Activated T-helper 1 cell treated with anti-CD3 and anti-CD28 coated beads, Interleukin-12 subunit alpha, Interleukin-12 subunit beta, Interleukin-2, Interleukin-4 antibody, amounts not matched to agents 30 ng/mL and 10 ng/mL and 1 ng/mL, durations not matched to agents 14 hours and 24 hours and 36 hours (primary cell): ENCODE measurements at regions of chr12 and their contacts with region 1.

Region 1: GRCh38 chr12:3885277-3886094 is 12.3 kb upstream of the PARP11 start:
- DNase-seq: no peak
- H3K4me3 Mint-ChIP-seq: no peak overlapping the region
- H3K27ac Mint-ChIP-seq: no peak overlapping the region
- H3K4me1 Mint-ChIP-seq: peaks cover 8% of the 10 kb centered on the region
- H3K27me3 Mint-ChIP-seq: peaks cover 12% of the 10 kb centered on the region

Region 2: GRCh38 chr12:3832738-3833137 is 52.7 kb before region 1 on chr12:
- intact Hi-C with region 1: no loop called
- DNase-seq: no peak
- H3K4me3 Mint-ChIP-seq: no peak overlapping the region
- H3K27ac Mint-ChIP-seq: no peak overlapping the region
- H3K4me1 Mint-ChIP-seq: peaks cover 18% of the 10 kb centered on the region
- H3K27me3 Mint-ChIP-seq: peaks cover 2% of the 10 kb centered on the region

Region 3: GRCh38 chr12:3964439-3964838 is 79.0 kb after region 1 on chr12:
- intact Hi-C with region 1: loop called (anchors 2 kb)
- DNase-seq: no peak
- H3K4me3 Mint-ChIP-seq: no peak overlapping the region
- H3K27ac Mint-ChIP-seq: no peak overlapping the region
- H3K4me1 Mint-ChIP-seq: peaks cover 18% of the 10 kb centered on the region
- H3K27me3 Mint-ChIP-seq: peaks cover 1% of the 10 kb centered on the region

Region 4: DNA sequence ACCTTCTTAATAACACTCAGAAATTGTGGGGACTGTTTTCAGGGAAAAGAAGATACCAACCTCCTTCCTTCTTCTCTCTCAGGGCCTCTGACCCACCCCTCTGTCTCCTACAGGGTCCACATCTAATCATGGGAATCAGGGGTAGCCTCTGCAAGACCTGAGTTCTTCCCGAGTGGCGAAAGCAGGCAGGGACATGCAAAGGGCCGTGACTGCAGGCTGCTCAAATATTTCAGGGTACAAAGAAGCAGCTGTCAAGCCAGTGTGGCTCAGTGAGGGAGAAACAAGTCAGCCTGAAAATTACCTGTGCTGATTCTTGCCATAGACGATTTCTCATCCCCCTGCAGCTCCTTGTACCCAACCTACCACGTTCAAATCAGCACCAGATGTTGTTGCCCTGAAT is 110.9 kb after region 1 on chr12:
- intact Hi-C with region 1: loop called (anchors 1 kb)
- DNase-seq: no peak
- H3K4me3 Mint-ChIP-seq: no peak overlapping the region
- H3K27ac Mint-ChIP-seq: no peak overlapping the region
- H3K4me1 Mint-ChIP-seq: peaks cover 16% of the 10 kb centered on the region
- H3K27me3 Mint-ChIP-seq: peaks cover 14% of the 10 kb centered on the region

Region 5: GRCh38 chr12:4037747-4038312 is 152.3 kb after region 1 on chr12:
- intact Hi-C with region 1: loop called (anchors 1 kb)
- DNase-seq: no peak
- H3K4me3 Mint-ChIP-seq: no peak overlapping the region
- H3K27ac Mint-ChIP-seq: no peak overlapping the region
- H3K4me1 Mint-ChIP-seq: peaks cover 6% of the 10 kb centered on the region
- H3K27me3 Mint-ChIP-seq: peaks cover 27% of the 10 kb centered on the region

Region 6: DNA sequence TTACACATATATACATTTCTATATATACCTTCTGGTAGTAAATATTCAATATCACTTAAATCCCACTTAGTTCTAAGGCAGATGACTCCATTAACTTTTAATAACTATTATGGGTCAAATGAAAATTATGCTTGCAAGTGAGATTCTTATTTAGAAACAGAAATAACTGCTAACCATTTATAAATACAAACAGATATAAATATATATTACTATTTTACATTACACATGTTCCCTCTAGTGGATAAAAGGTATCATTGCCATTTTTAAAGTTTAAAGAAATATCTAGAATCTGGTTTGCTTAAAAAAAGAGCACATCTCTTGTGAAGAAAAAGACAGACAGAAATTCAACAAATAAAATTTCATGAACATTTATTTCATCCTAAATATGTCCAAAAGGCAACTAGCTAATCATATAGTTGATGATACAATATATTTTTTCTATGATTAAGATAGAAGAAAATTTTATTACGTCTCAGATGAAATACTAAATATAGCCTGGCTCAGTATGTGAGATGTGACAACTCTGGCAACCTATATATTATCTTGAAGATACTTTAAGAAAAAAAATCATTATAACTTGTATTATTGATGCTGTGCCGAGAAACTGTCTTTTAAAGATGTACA is 641.5 kb after region 1 on chr12:
- intact Hi-C with region 1: loop called (anchors 5 kb)
- DNase-seq: no peak
- H3K4me3 Mint-ChIP-seq: no peak overlapping the region
- H3K27ac Mint-ChIP-seq: no peak overlapping the region
- H3K4me1 Mint-ChIP-seq: no peaks in the 10 kb centered on the region
- H3K27me3 Mint-ChIP-seq: no peaks in the 10 kb centered on the region

Region 7: DNA sequence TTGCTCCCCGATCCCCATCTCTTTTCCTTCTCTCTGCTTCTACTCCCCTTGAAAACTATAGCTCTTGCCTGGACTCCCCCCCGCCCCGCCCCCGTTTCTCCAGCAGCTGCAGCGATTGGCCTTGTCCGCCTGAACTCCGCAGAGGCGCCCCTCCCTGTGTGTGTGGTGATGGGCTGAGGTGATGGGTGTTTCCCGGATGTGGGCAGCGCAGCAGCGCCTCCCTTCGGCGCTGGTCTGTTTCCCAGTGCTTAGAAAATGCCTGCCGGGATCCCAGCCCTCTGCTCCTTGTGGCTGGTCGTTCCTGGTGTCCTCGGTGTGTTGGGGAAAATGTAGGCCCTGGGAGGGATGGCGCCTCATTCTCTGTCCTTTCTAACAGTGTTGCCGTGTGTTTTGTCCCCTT is 878.1 kb after region 1 on chr12:
- intact Hi-C with region 1: loop called (anchors 5 kb)
- DNase-seq: no peak
- H3K4me3 Mint-ChIP-seq: no peak overlapping the region
- H3K27ac Mint-ChIP-seq: no peak overlapping the region
- H3K4me1 Mint-ChIP-seq: no peaks in the 10 kb centered on the region
- H3K27me3 Mint-ChIP-seq: peaks cover 2% of the 10 kb centered on the region